Activated CD4-positive, alpha-beta T cell treated with anti-CD3 and anti-CD28 coated beads, Interleukin-2, amount 10 ng/mL, durations not matched to agents 24 days and 14 days (primary cell): ENCODE measurements at regions of chr1 and their contacts with region 1.

Region 1: GRCh38 chr1:156705918-156706656 is 704 bp upstream of the CRABP2 start:
- DNase-seq: peak; percentile 90
- H3K4me3 Mint-ChIP-seq: peak overlapping the region; percentile 89
- H3K27ac Mint-ChIP-seq: peak overlapping the region; percentile 72
- H3K4me1 Mint-ChIP-seq: peaks cover 20% of the 10 kb centered on the region
- H3K27me3 Mint-ChIP-seq: peaks cover 42% of the 10 kb centered on the region

Region 2: DNA sequence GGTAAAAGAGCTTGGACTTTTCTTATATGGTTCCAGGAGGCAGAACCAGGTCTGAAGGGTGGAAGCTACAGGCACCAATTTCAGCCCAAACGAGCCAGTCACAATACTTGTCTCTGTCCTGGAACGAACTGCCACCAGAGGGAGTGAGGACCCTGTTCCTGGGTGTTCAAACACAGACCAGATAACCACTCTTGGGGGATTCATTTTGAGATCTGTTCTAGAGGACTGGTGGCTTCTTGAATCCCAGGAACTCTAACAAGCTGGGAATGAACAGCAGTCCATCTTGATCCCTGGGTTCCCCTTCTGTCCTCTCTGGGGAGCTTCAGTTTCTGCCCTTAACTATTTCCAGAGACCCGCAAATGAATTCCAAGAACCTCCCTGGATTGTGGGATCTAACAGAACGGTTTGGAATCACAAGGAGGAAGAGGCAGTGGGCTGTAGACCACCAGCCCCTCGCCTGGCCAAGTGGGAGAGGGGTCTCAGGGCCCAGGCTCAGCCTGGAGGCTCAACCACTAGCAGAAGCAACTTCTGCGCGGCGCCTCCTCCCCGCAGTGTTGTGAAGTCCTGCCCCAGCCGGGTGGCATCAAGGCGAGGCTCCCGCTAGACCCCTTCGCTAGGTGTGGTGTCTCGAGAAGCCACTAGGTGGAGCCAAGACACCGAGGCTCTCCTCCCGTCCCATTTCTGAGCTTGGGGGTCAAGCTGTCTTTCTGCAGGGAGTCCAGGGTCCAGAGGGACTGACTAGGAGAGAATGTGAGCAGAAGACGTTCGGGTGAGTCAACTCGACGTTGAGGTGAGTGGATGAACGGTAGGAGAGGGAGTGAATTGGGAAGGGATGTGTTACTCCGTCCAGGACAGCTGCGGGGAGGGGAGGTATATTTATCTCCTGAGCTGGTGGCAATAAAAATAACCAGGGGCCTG is 16.8 kb before region 1 on chr1:
- intact Hi-C with region 1: loop called (anchors 1 kb)
- DNase-seq: peak; percentile 92
- H3K4me3 Mint-ChIP-seq: peak overlapping the region; percentile 68
- H3K27ac Mint-ChIP-seq: no peak overlapping the region
- H3K4me1 Mint-ChIP-seq: peaks cover 28% of the 10 kb centered on the region
- H3K27me3 Mint-ChIP-seq: peaks cover 60% of the 10 kb centered on the region

Region 3: GRCh38 chr1:156836041-156836657 is 130.1 kb after region 1 on chr1:
- intact Hi-C with region 1: no loop called
- DNase-seq: peak; percentile 90
- H3K4me3 Mint-ChIP-seq: peak overlapping the region; percentile 52
- H3K27ac Mint-ChIP-seq: peak overlapping the region; percentile 89
- H3K4me1 Mint-ChIP-seq: peaks cover 64% of the 10 kb centered on the region
- H3K27me3 Mint-ChIP-seq: peaks cover 7% of the 10 kb centered on the region

Region 4: DNA sequence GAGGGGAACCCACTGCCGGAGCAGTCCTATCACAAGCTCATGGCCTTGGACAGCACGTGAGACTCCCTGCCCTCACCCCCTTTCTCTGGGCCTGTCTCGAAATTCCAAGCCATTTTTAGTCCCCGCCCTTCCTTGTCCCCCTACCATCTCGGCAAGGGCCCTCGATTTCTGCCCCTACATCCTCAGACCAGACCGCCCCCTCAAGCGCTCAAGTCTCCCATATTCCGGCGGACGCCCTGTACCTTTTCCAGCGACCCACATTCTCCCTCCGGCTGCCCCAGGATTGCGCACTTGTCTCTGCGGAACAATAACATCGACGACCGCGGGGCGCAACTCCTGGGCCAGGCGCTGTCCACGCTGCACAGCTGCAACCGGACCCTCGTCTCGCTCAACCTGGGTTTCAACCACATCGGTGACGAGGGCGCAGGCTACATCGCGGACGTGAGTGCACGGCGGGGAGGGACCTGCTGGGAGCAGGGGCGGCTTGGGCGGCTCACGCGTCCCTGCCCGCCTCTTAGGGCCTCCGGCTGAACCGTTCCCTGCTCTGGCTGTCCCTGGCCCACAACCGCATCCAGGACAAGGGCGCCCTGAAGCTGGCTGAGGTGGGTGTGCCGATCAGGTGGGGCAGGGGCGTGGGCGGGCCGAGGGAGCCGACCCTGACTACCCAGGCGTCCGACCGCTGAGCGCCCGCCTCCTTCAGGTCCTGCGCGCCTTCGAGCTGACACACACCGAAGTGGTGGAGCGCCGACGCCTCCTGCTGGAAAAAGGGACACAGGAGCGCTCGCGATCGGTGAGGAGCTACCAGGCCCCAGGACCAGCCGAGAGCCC is 221.3 kb after region 1 on chr1:
- intact Hi-C with region 1: no loop called
- DNase-seq: peak; percentile 92
- H3K4me3 Mint-ChIP-seq: peak overlapping the region; percentile 53
- H3K27ac Mint-ChIP-seq: no peak overlapping the region
- H3K4me1 Mint-ChIP-seq: peaks cover 23% of the 10 kb centered on the region
- H3K27me3 Mint-ChIP-seq: peaks cover 76% of the 10 kb centered on the region